Posterior vena cava (tissue), 2 donors: ENCODE measurements at regions of chr17 and their contacts with region 1.

Region 1: DNA sequence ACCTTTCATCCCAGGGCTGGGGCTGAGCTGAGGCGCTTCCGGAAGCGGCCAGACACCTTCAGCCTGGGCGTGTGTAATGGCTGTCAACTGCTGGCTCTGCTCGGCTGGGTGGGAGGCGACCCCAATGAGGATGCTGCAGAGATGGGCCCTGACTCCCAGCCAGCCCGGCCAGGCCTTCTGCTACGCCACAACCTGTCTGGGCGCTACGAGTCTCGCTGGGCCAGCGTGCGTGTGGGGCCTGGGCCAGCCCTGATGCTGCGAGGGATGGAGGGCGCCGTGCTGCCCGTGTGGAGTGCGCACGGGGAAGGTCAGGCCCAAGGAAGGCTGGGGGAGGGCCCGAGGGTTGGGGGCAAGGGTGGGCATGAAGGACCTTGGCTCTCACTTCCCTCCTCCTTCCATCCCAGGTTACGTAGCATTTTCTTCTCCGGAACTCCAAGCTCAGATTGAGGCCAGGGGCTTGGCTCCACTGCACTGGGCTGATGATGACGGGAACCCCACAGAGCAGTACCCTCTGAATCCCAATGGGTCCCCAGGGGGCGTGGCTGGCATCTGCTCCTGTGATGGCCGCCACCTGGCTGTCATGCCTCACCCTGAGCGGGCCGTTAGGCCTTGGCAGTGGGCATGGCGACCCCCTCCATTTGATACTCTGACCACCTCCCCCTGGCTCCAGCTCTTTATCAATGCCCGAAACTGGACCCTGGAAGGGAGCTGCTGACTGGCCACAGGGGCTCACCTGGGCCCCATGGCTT is 19.6 kb downstream of the PFAS start:
- DNase-seq: no peak

Region 2: DNA sequence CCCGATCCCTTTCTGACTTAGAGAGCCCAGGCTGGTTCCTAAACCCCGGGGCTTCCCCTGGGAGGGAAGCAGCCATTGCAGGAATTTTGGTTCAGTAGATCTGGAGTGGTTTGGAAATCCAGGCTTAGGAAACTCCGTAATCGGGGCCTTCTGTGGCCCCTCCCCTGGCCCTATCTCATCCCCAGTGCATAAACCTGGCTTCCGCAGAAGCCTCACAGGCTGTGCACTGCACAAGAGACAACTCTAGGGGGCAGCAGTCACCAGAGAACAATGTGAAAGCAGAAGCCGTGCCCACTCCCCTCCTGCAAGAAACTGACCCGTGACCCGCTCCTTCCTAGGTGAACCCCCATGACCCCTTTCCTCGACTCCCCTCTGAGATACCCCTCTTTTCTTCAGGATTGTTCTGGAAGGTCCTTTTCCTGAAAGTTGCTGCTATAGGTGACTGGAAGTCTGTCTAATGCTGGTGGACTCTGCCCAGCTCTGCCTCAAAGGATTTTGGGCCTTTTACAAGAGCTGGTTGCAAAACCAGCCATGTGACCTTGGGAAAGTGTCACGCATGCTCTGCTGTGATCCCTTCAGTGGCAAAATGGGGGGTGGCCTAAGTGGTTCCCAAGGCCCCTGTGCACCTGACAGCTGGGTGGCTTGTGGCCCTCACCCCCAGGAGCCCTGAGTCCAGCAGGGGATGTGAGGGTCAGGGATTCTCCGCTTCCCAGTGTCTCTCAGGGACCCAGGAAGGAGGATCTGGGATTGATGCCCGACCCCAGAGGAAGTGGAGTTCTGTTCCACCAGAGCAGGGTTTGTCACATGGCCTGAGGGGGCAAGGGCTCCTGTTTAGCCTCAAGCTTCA is 251.9 kb before region 1 on chr17:
- intact Hi-C with region 1: no loop called
- DNase-seq: peak; percentile 82

Region 3: GRCh38 chr17:8243827-8244226 is 24.9 kb before region 1 on chr17:
- intact Hi-C with region 1: loop called in 1 of 2 experiments (anchors 2 kb)
- DNase-seq: no peak

Region 4: DNA sequence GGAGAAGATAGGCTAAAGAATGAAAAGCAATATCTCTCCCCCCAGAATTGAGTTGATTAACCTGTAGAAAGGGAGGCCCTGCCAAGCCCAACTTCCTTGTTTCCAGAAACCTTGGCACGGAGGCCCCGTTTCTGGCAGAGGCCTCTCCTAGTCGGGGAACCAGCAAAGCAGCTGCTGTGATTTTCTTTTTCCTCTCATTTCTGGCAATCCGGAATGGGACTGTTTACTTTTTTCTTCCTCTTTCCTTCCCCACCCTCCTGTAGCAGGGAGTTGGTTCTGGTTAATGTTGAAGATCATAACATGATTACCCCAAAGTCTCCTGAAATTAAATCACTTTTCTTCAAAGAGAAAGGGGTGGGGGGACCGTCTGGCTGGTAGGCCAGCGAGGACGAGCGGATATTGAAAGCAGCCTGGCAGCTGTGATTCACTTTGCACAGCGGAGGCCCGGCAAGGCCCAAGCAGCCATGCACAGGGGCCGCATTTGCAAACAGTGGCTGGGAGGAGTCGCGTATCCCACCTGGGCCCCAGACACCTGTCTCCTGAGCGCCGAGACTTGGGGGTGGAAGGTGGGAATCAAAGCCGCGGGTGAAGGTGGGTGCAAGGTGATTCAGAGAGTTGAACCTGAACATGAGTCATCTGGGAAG is 804.1 kb after region 1 on chr17:
- intact Hi-C with region 1: loop called in 1 of 2 experiments (anchors 5 kb)
- DNase-seq: peak; percentile 83